ENCODE measurements at regions of chr17 and their contacts with region 1.

Region 1: DNA sequence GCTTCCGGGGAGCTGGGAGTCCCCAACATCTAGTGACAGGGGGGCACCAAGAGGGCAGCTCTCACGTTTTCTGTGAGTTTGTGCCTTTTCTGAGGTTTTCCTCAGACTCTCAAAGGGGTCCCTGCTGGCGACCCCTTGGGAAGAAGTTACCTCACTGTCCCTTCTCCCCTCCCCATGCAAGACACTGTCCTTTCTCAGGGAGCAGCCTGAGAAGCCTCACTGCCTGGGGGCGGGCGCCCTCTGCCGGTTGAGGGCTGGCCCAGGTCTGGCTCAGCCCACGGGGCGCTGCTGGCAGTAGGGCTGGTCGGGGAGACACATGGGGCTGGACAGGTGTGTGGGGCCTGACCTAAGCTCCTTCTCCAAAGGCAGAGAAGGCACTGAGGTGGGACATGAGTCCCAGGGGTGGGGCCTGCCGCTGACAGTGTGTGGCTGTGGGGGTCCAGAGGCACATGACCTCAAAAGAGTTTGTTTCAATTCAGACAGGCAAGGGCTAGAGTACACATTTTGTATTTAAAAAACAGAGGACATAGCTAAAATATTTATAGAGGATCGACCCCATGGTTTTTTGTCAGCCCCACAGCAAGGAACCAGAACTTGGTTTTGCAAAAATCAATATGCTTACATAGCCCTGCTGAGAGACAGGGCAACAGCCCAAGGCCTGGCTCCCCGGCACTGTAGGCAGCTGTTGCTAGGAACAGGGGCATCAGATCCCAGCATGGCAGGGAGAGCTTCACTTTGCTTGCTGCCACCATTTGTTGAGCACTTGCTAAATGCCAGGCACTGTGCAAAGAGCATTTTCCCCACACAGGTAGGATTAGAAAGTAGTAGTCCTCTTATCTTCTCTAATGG is 18.5 kb upstream of the ALDH3A1 start:
- DNase-seq: peak; percentile 87

Region 2: DNA sequence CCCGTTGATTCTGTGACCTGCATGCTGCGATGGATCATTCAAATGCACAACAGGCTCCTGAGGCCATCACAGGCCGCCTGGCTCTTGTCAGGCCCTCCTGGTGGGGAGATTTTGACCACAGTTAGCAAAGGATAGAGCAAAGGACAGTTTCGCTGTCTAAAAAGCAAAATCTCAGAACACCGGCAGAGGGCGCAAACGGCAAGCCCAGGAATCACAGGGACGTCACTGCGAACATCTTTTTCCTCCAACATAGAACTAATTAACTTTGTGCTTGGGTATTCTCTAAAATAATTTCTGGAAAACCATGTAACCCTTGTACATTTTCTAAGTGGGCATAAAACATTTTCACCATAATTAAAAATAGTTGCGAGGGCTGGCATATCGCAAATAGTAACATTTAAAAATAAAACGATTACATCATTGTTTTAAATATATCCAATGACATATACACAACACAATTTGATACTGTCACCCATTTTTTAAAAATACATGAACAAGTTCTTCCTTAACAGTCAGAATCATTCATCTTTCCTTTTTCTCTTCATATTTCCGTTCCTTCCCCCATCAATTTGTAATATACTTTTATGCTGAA is 252.7 kb before region 1 on chr17:
- intact Hi-C with region 1: loop called (anchors 2 kb)
- DNase-seq: peak; percentile 80

Region 3: DNA sequence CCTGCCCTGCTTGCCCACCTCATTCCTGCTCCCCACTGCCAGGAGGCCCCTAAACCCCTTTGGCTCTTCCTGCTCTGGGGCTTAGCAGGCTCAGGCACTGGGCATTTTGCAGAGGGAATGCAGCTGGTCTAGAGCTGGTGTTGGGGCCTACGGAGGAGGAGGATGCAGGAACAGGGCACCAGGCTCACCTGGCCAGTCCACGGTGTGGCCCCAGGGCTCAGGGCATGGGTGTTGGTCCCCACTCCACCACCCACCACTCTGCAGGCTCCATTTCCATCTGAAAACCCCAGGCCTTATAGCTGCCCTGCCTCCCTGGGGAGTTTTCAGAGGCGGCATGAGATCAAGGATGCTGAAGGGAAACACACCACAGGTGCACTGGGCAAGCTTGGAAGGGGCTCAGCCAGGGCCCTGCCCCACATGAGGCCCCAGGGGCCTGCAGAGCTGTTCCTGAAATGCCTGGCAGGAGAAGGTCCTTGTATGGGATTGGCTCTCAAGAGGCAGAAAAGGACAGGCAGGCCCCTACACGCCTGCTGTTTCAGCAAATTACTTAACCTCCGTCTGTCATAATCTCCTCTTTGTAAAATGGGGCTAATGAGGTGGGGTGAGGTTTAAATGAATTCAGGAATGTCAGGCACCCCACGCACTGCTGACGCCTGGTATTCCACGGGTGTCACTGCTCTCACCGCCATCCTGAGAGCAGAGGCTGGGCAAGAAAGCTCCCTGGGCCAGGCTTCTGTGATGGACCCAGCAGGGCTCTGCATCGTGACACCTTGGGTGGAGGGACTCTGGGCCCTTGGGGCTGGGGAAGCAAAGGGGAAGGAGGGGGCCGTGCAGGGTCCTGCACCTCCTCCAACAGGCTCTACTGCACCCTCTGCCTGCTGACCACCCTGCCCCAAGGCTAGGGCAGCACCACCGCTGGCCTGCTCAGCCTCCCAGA is 59.6 kb before region 1 on chr17:
- intact Hi-C with region 1: loop called (anchors 5 kb)
- DNase-seq: no peak

Region 4: GRCh38 chr17:19787733-19788357 is 21.2 kb after region 1 on chr17:
- intact Hi-C with region 1: no loop called
- DNase-seq: no peak

Region 5: GRCh38 chr17:20121359-20122253 is 355.0 kb after region 1 on chr17:
- intact Hi-C with region 1: no loop called
- DNase-seq: no peak